A549 (cell line): ENCODE measurements at regions of chr10 and their contacts with region 1.

Region 1: DNA sequence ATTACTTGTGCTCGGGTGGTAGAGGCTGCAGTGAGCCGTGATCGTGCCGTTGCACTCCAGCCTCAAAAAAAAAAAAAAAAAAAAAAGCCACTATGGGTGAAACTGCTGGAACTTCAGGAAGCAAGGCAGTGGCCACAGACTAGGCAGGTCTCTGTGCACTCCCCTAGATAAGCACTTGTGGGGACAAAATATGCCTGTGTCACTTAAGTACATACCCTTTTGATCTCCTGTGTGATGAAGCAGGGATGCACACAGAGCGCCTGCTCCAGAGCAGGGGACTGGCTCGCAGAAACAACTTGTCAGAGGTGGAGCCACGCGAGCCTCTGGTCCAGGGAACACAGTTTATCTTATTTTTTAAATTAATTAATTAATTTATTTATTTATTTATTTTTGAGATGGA is 42.9 kb upstream of the PSAP start:
- DNase-seq: no peak
- ATAC-seq: no peak
- H3K4me3 ChIP-seq: no peak overlapping the region
- H3K27ac ChIP-seq: no peak overlapping the region
- H3K4me1 ChIP-seq: peaks cover 17% of the 10 kb centered on the region
- CTCF ChIP-seq: no peak
- EP300 ChIP-seq: no peak
- POLR2A ChIP-seq: no peak
- RAD21 ChIP-seq: no peak

Region 2: GRCh38 chr10:71536332-71536731 is 357.6 kb before region 1 on chr10:
- CTCF ChIA-PET with region 1: no interaction called
- POLR2A ChIA-PET with region 1: no interaction called
- DNase-seq: no peak
- ATAC-seq: no peak
- H3K4me3 ChIP-seq: no peak overlapping the region
- H3K27ac ChIP-seq: no peak overlapping the region
- H3K4me1 ChIP-seq: no peaks in the 10 kb centered on the region
- CTCF ChIP-seq: no peak
- EP300 ChIP-seq: no peak
- POLR2A ChIP-seq: no peak
- RAD21 ChIP-seq: no peak

Region 3: DNA sequence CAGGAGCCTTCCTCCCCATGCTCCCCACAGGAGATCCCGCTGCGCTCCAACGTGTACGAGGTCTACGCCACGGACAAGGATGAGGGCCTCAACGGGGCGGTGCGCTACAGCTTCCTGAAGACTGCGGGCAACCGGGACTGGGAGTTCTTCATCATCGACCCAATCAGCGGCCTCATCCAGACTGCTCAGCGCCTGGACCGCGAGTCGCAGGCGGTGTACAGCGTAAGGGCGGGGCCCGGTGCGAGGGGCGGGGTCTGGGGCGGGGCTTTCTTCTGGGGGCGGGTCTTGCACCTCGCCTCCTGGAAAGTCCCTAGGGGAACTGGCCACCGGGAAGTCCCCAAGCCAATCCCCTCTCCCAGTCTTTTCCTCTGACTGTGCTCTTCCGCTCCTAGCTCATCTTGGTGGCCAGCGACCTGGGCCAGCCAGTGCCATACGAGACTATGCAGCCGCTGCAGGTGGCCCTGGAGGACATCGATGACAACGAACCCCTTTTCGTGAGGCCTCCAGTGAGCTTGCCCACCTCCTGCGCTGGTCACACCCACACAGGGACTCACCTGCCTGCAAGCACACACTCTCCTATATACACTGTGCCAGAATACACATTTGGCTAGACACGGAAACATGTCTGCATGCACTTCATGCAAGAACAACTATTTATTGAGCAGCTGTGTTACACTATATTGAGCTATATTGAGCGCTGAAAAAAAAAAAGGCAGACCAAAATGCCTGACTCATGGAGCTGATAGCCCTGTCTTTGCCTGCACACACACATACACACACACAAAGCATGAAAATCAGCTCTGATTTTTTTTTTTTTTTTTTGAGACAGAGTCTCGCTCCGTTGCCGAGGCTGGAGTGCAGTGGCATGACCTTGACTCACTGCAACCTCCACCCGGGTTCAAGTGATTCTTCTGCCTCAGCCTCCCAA is 87.9 kb before region 1 on chr10:
- CTCF ChIA-PET with region 1: interaction called, 101 read pairs
- POLR2A ChIA-PET with region 1: no interaction called
- DNase-seq: peak in 1 of 2 experiments; percentile 22
- ATAC-seq: peak; percentile 5 to 27; a peak in 5 of 6 replicates
- H3K4me3 ChIP-seq: no peak overlapping the region
- H3K27ac ChIP-seq: no peak overlapping the region
- H3K4me1 ChIP-seq: no peaks in the 10 kb centered on the region
- CTCF ChIP-seq: no peak
- EP300 ChIP-seq: no peak
- POLR2A ChIP-seq: no peak
- RAD21 ChIP-seq: no peak

Region 4: GRCh38 chr10:71835671-71836595 is 58.0 kb before region 1 on chr10:
- CTCF ChIA-PET with region 1: interaction called, 217 read pairs
- POLR2A ChIA-PET with region 1: interaction called, 5 read pairs
- DNase-seq: no peak
- ATAC-seq: no peak
- H3K4me3 ChIP-seq: no peak overlapping the region
- H3K27ac ChIP-seq: peak overlapping the region in 1 of 2 experiments; percentile 41; a peak in 3 of 6 replicates
- H3K4me1 ChIP-seq: peaks cover 75% of the 10 kb centered on the region
- CTCF ChIP-seq: no peak
- EP300 ChIP-seq: no peak
- POLR2A ChIP-seq: no peak
- RAD21 ChIP-seq: no peak

Region 5: GRCh38 chr10:71880425-71881306 is 13.3 kb before region 1 on chr10:
- CTCF ChIA-PET with region 1: interaction called, 21 read pairs
- POLR2A ChIA-PET with region 1: no interaction called
- DNase-seq: peak in 1 of 2 experiments; percentile 28
- ATAC-seq: peak; percentile 68 to 73; a peak in 5 of 6 replicates
- H3K4me3 ChIP-seq: no peak overlapping the region
- H3K27ac ChIP-seq: peak overlapping the region; percentile 52 to 81
- H3K4me1 ChIP-seq: peaks cover 31% of the 10 kb centered on the region
- CTCF ChIP-seq: no peak
- EP300 ChIP-seq: no peak
- POLR2A ChIP-seq: no peak
- RAD21 ChIP-seq: no peak

Region 6: GRCh38 chr10:71974489-71975021 is 80.6 kb after region 1 on chr10:
- CTCF ChIA-PET with region 1: interaction called, 22 read pairs
- POLR2A ChIA-PET with region 1: interaction called, 3 read pairs
- DNase-seq: peak; percentile 80 to 84
- ATAC-seq: peak; percentile 65 to 69
- H3K4me3 ChIP-seq: no peak overlapping the region
- H3K27ac ChIP-seq: peak overlapping the region; percentile 87 to 98
- H3K4me1 ChIP-seq: peaks cover 100% of the 10 kb centered on the region
- CTCF ChIP-seq: no peak
- EP300 ChIP-seq: peak in 1 of 2 experiments; percentile 39; a peak in 1 of 5 replicates
- POLR2A ChIP-seq: no peak
- RAD21 ChIP-seq: no peak

Region 7: DNA sequence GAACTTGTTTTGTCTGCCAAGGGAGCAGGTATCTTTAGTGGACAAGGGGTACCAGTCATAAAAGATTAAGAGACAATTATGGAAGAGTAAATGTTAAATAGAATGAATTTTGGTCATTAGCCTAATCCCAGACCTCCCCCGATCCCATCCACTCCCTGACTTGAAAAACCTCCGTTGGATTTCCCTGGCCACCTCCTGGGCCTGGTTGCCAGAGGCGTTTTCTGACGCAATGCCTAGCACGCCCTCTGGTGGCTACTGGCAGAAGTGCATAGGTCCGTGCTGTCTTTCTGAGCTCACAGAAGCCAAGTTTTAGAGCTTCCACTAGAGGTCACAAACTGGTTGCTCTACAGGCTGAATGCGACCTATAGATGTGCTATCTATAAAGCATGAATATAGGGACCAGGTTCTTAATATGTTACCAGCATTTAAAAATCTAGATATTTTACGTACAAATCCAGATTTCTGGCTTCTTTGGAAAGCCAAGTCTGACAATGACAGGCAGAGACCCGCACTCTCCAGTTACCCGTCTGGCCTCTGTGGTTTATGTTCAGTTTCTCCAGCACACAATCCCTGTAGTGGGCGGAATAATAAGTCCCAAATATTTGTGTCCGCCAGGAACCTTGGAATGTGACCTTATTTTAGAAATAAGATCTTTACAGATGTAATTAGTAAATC is 154.7 kb after region 1 on chr10:
- CTCF ChIA-PET with region 1: interaction called, 141 read pairs
- POLR2A ChIA-PET with region 1: no interaction called
- DNase-seq: peak; percentile 92 to 94
- ATAC-seq: peak; percentile 90 to 92
- H3K4me3 ChIP-seq: no peak overlapping the region
- H3K27ac ChIP-seq: peak overlapping the region; percentile 68 to 72
- H3K4me1 ChIP-seq: peaks cover 3% of the 10 kb centered on the region; the same call in 1 of the 3 replicates
- CTCF ChIP-seq: peak; percentile 100
- EP300 ChIP-seq: no peak
- POLR2A ChIP-seq: no peak
- RAD21 ChIP-seq: peak; percentile 98 to 99